ENCODE measurements at regions of chr2 and their contacts with region 1.

Region 1: GRCh38 chr2:23926750-23927571 is at the start of gene ATAD2B:
- DNase-seq: peak; percentile 94
- H3K4me3 Mint-ChIP-seq: peak within 1 kb of the TSS; percentile 89
- H3K27ac Mint-ChIP-seq: peak within 1 kb of the TSS; percentile 96
- H3K4me1 Mint-ChIP-seq: peaks cover 22% of the 10 kb centered on the region
- H3K27me3 Mint-ChIP-seq: no peaks in the 10 kb centered on the region
- total RNA-seq, gene ATAD2B: 24.2 and 24.8 TPM in 2 replicates

Region 2: DNA sequence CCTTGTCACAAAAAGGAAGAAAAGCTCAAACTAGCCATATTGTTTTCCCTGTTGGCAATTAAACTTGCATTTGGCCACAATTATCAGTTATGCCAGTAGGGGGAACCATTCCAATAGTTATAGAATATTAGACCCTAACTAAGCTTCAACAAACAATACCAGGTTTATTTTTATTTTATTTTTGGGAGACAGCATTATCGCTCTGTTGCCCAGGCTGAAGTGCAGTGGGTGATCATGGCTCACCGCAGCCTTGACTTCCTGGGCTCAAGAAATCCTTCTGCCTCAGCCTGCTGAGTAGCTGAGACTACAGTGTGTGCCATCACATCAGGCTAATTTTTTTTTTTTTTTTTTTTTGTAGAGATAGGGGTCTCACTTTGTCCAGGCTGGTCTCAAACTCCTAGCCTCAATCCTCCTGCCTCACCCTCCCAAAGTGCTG is 102.2 kb before region 1 on chr2:
- intact Hi-C with region 1: loop called (anchors 10 kb)
- DNase-seq: no peak
- H3K4me3 Mint-ChIP-seq: no peak overlapping the region
- H3K27ac Mint-ChIP-seq: no peak overlapping the region
- H3K4me1 Mint-ChIP-seq: no peaks in the 10 kb centered on the region
- H3K27me3 Mint-ChIP-seq: no peaks in the 10 kb centered on the region

Region 3: GRCh38 chr2:23939987-23940717 is 13.2 kb after region 1 on chr2 and contains the start of gene UBXN2A:
- intact Hi-C with region 1: loop called (anchors 1 kb)
- DNase-seq: peak; percentile 75
- H3K4me3 Mint-ChIP-seq: peak within 1 kb of the TSS; percentile 92
- H3K27ac Mint-ChIP-seq: peak within 1 kb of the TSS; percentile 89
- H3K4me1 Mint-ChIP-seq: peaks cover 27% of the 10 kb centered on the region
- H3K27me3 Mint-ChIP-seq: peaks cover 4% of the 10 kb centered on the region
- total RNA-seq, gene UBXN2A: 17.6 and 18.3 TPM in 2 replicates

Region 4: DNA sequence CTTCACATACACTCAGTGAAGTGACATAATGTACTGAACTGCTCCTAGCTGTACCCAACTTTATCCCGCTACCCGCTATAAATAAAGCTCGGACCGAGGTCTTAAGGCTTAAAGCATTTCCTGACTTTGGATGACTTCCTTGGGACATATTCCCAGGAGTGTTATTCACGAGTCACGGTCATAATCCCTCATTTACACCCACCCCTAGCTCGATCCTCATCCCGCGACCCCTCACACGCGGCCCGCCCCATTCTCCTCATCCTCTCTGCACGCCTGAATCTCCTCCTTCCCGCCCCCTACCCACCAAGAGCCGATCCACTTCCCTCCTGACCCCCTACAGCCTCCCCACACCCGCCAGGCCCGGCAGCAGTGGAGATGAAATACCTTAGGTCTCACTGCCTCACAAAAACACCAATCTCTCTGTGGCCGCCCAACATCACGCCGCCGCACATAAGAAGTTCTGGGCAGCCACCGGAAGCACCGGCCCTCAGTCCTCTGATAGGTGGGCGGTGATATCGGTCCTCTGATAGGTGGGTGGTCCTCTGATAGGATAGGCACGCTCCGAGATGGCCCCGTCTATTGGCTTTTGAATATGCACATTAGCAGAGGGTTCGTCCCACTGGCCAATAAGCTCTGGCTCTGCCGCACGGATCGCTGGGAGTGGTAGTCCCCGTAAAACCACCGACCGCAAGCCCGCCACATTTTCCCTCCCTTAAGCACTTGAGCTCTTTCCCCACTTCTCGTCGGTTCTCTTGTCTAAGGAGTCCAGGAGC is 120.2 kb after region 1 on chr2 and contains the start of gene WDCP:
- intact Hi-C with region 1: loop called (anchors 1 kb)
- DNase-seq: peak; percentile 93
- H3K4me3 Mint-ChIP-seq: peak within 1 kb of the TSS; percentile 93
- H3K27ac Mint-ChIP-seq: peak within 1 kb of the TSS; percentile 81
- H3K4me1 Mint-ChIP-seq: peaks cover 20% of the 10 kb centered on the region
- H3K27me3 Mint-ChIP-seq: peaks cover 6% of the 10 kb centered on the region
- total RNA-seq, gene WDCP: 22.0 and 22.1 TPM in 2 replicates

Region 5: GRCh38 chr2:24075915-24076848 is 149.2 kb after region 1 on chr2 and contains the start of gene SF3B6:
- intact Hi-C with region 1: loop called (anchors 1 kb)
- DNase-seq: peak; percentile 98
- H3K4me3 Mint-ChIP-seq: peak within 1 kb of the TSS; percentile 97
- H3K27ac Mint-ChIP-seq: peak within 1 kb of the TSS; percentile 97
- H3K4me1 Mint-ChIP-seq: peaks cover 31% of the 10 kb centered on the region
- H3K27me3 Mint-ChIP-seq: no peaks in the 10 kb centered on the region
- total RNA-seq, gene SF3B6: 137 and 143 TPM in 2 replicates

Region 6: GRCh38 chr2:24084386-24085361 is 157.7 kb after region 1 on chr2 and contains the start of gene TP53I3:
- intact Hi-C with region 1: loop called (anchors 2 kb)
- DNase-seq: peak; percentile 79
- H3K4me3 Mint-ChIP-seq: peak within 1 kb of the TSS; percentile 84
- H3K27ac Mint-ChIP-seq: peak within 1 kb of the TSS; percentile 70
- H3K4me1 Mint-ChIP-seq: peaks cover 18% of the 10 kb centered on the region
- H3K27me3 Mint-ChIP-seq: no peaks in the 10 kb centered on the region
- total RNA-seq, gene TP53I3: 2.7 and 3.1 TPM in 2 replicates

Region 7: GRCh38 chr2:24164125-24164973 is 237.4 kb after region 1 on chr2:
- intact Hi-C with region 1: loop called (anchors 2 kb)
- DNase-seq: no peak
- H3K4me3 Mint-ChIP-seq: no peak overlapping the region
- H3K27ac Mint-ChIP-seq: no peak overlapping the region
- H3K4me1 Mint-ChIP-seq: no peaks in the 10 kb centered on the region
- H3K27me3 Mint-ChIP-seq: peaks cover 2% of the 10 kb centered on the region